PC-9 (cell line): ENCODE measurements at regions of chr11 and their contacts with region 1.

Region 1: DNA sequence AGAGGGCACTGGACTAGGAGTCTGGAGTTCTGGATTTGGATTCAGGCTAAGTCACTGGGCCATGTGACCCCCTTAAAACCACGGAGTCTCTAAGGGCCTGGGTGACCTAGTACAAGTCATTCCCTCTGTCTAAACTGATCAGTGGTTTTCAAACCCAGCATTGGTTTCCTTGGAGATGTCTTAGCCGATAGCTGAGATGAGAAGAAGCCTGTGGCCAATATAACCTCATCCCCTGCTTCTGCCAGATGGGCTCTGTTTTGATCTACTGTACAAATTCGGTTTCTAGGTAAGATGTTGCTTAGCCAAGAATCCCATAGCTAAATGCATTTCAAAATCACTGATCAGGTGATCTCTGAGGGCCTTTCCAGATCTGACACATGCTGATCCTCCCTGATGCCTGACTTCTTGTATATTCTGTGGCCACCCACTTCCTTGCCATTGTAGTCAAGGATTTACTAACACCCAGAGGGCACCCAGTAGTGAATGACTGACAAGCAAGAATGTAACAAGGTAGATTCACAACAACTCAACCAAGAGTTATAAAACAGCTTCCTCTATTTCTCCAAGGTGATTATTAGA is 53.1 kb downstream of the GALNT18 start:
- DNase-seq: no peak
- H3K4me3 ChIP-seq: no peak overlapping the region
- H3K27ac ChIP-seq: no peak overlapping the region
- H3K4me1 ChIP-seq: no peaks in the 10 kb centered on the region
- H3K27me3 ChIP-seq: 0 out of 2 replicates have a peak, but pooled peaks cover 7% of the 10 kb centered on the region
- CTCF ChIP-seq: no peak

Region 2: DNA sequence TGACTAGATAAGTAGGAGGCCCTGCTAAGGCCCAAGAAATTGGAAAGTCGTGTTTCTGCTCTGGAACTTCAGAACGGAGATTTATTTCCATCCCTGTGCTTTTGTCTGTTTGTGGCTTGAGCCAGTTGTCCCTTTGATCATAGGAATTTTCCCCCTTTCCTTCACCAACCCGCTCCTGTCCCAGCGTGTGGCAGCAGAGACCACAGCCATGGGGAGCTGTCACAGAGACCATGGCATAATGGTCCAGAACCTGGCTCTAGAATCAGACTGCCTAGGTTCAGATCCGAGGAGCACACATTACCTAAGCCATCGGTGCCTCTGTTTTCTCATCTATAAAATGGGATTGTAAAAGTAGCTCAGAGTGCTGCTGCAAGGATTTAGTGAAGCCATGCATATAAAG is 75.0 kb before region 1 on chr11:
- CTCF ChIA-PET with region 1: interaction called, 12 read pairs
- POLR2A ChIA-PET with region 1: no interaction called
- intact Hi-C with region 1: no loop called
- DNase-seq: no peak
- H3K4me3 ChIP-seq: no peak overlapping the region
- H3K27ac ChIP-seq: no peak overlapping the region
- H3K4me1 ChIP-seq: no peaks in the 10 kb centered on the region
- H3K27me3 ChIP-seq: no peaks in the 10 kb centered on the region
- CTCF ChIP-seq: no peak

Region 3: DNA sequence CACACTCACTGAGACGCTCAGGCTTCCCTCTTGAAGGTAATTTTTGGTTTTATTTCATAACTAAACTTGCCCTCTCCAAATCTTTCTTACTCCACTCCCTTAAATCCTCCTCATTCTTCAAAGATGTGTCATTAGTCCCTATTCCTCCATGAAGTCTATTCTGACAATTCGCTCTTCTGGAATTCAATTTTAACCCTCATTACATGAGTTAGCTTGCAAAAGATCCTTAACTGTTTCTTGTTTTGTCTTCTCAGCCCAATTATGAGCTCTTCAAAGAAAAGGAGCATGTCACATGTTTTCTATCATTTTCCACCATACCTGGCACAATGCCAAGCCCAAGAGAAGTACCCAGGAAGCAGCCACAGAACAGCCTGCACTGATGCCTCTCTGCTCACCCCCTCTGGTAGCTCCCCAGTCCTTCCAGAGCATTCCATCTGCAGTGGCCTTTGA is 40.1 kb after region 1 on chr11:
- CTCF ChIA-PET with region 1: no interaction called
- POLR2A ChIA-PET with region 1: no interaction called
- intact Hi-C with region 1: no loop called
- DNase-seq: no peak
- H3K4me3 ChIP-seq: no peak overlapping the region
- H3K27ac ChIP-seq: no peak overlapping the region
- H3K4me1 ChIP-seq: no peaks in the 10 kb centered on the region
- H3K27me3 ChIP-seq: peaks cover 38% of the 10 kb centered on the region
- CTCF ChIP-seq: no peak